Right cardiac atrium (tissue), 5 donors: ENCODE measurements at regions of chr4 and their contacts with region 1.

Region 1: GRCh38 chr4:13872155-13872554 is 244.6 kb upstream of the BOD1L1 start:
- DNase-seq: no peak
- ATAC-seq: no peak
- H3K4me3 ChIP-seq: no peak overlapping the region
- H3K27ac ChIP-seq: no peak overlapping the region
- H3K4me1 ChIP-seq: no peaks in the 10 kb centered on the region
- H3K27me3 ChIP-seq: no peaks in the 10 kb centered on the region

Region 2: GRCh38 chr4:14294611-14295010 is 422.5 kb after region 1 on chr4:
- intact Hi-C with region 1: loop called in 1 of 4 experiments (anchors 10 kb)
- DNase-seq: no peak
- ATAC-seq: no peak
- H3K4me3 ChIP-seq: no peak overlapping the region
- H3K27ac ChIP-seq: no peak overlapping the region
- H3K4me1 ChIP-seq: no peaks in the 10 kb centered on the region
- H3K27me3 ChIP-seq: no peaks in the 10 kb centered on the region